HCT116 (cell line): ENCODE measurements at regions of chr1 and their contacts with region 1.

Region 1: GRCh38 chr1:202018468-202019255 is 8.3 kb downstream of the ELF3 start:
- DNase-seq: peak; percentile 81
- ATAC-seq: peak; percentile 75
- H3K4me3 ChIP-seq: peak overlapping the region; percentile 23 to 48
- H3K27ac ChIP-seq: peak overlapping the region; percentile 94
- H3K4me1 ChIP-seq: peaks cover 93 to 100% of the 10 kb centered on the region in 2 experiments
- H3K27me3 ChIP-seq: no peaks in the 10 kb centered on the region
- CTCF ChIP-seq: no peak
- POLR2A ChIP-seq: no peak
- RAD21 ChIP-seq: no peak

Region 2: GRCh38 chr1:201925981-201926645 is 92.5 kb before region 1 on chr1:
- CTCF ChIA-PET with region 1: no interaction called
- POLR2A ChIA-PET with region 1: no interaction called
- RAD21 ChIA-PET with region 1: no interaction called
- intact Hi-C with region 1: no loop called
- DNase-seq: no peak
- ATAC-seq: no peak
- H3K4me3 ChIP-seq: no peak overlapping the region
- H3K27ac ChIP-seq: no peak overlapping the region
- H3K4me1 ChIP-seq: peaks cover 3 to 6% of the 10 kb centered on the region in 2 experiments; a peak in 3 of 4 replicates
- H3K27me3 ChIP-seq: no peaks in the 10 kb centered on the region
- CTCF ChIP-seq: no peak
- POLR2A ChIP-seq: no peak
- RAD21 ChIP-seq: no peak

Region 3: GRCh38 chr1:202029171-202029665 is 10.6 kb after region 1 on chr1:
- CTCF ChIA-PET with region 1: no interaction called
- POLR2A ChIA-PET with region 1: interaction called, 174 read pairs
- RAD21 ChIA-PET with region 1: no interaction called
- intact Hi-C with region 1: no loop called
- DNase-seq: peak; percentile 73
- ATAC-seq: peak; percentile 77
- H3K4me3 ChIP-seq: peak overlapping the region in 1 of 2 experiments; percentile 8; a peak in 1 of 4 replicates
- H3K27ac ChIP-seq: peak overlapping the region; percentile 72
- H3K4me1 ChIP-seq: peaks cover 48 to 73% of the 10 kb centered on the region in 2 experiments
- H3K27me3 ChIP-seq: no peaks in the 10 kb centered on the region
- CTCF ChIP-seq: no peak
- POLR2A ChIP-seq: no peak
- RAD21 ChIP-seq: peak; percentile 32; the same call in 1 of the 2 replicates

Region 4: DNA sequence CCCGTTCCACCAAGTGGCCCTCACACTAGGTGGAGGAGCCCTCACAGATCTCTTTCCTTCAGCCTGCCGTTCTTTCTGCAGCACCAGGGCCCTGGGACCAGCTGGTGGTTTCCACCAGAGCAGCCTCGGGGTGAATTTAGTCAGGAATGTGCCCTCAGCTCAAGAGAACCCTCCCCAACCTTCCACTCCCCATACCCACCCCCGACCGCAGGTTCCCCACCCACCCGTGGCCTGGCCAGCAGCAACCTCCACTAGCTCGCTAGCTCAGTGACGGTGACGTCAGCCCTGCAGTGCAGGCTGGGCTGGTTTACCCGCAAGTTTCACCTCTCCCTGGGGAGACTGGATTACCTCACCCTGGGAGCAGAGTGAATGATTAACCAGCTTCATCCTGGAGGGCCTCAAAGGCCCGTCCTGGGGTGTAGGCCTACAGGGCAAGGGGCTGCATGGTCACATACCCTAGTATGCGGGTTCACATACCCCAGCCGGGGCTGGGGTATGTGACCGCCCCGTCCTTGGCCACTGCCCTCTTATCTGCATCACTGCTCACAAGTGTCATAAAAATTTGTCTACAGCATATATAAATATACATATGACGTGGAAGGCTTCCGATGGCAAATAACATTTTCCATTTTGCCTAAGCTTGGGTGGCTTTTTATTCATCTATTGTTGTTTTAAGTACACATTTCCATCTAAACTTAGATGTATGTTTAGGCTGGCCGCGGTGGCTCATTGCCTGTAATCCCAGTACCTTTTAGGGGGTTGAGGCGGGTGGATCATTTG is 16.2 kb after region 1 on chr1:
- CTCF ChIA-PET with region 1: no interaction called
- POLR2A ChIA-PET with region 1: interaction called, 45 read pairs
- RAD21 ChIA-PET with region 1: interaction called in 1 of 2 experiments, 3 read pairs
- intact Hi-C with region 1: no loop called
- DNase-seq: peak; percentile 91
- ATAC-seq: peak; percentile 93
- H3K4me3 ChIP-seq: peak overlapping the region; percentile 20 to 44; a peak in 3 of 4 replicates
- H3K27ac ChIP-seq: peak overlapping the region; percentile 93
- H3K4me1 ChIP-seq: peaks cover 44 to 63% of the 10 kb centered on the region in 2 experiments
- H3K27me3 ChIP-seq: no peaks in the 10 kb centered on the region
- CTCF ChIP-seq: no peak
- POLR2A ChIP-seq: no peak
- RAD21 ChIP-seq: peak; percentile 24; the same call in 1 of the 2 replicates

Region 5: GRCh38 chr1:202056644-202057461 is 38.2 kb after region 1 on chr1:
- CTCF ChIA-PET with region 1: no interaction called
- POLR2A ChIA-PET with region 1: interaction called, 19 read pairs
- RAD21 ChIA-PET with region 1: interaction called in 1 of 2 experiments, 3 read pairs
- intact Hi-C with region 1: loop called (anchors 2 kb)
- DNase-seq: peak; percentile 76
- ATAC-seq: peak; percentile 84
- H3K4me3 ChIP-seq: peak overlapping the region; percentile 11 to 43; a peak in 3 of 4 replicates
- H3K27ac ChIP-seq: peak overlapping the region; percentile 91
- H3K4me1 ChIP-seq: peaks cover 49 to 60% of the 10 kb centered on the region in 2 experiments
- H3K27me3 ChIP-seq: no peaks in the 10 kb centered on the region
- CTCF ChIP-seq: no peak
- POLR2A ChIP-seq: no peak
- RAD21 ChIP-seq: no peak

Region 6: DNA sequence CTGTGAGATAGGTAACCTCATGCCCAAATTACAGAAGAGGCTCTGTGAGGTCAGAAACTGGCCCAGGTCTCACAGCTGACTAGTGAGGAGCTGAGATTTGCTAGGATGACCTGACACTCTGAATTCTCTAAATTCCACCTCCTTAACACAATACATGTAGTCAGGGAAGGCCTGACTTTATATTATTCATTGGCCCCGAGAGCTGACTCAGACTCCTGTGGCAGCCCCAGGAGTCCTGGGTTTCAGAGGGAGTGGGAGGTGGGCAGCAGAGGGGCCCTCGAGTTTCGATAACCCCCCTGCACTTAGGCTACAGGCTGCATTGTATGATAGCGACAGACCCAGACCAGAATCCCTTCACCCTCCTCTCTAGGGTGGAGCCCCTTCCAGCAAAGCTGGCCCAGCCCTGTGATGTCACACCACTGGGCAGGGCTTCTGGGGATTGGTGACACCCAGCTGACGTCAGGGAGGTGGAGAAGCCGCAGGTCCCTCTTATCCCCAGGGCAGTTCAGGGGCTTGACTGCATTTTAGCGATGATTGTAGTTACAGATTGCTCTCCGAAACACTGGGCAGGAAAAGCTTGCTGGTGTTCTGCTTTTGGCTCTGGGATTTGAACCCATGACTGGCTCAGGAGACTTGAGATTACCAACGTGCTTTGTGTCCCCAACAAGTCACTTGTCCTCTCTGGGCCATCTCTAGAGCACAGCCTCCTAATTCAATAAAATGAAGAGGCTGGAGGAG is 87.0 kb after region 1 on chr1:
- CTCF ChIA-PET with region 1: no interaction called
- POLR2A ChIA-PET with region 1: interaction called, 10 read pairs
- RAD21 ChIA-PET with region 1: interaction called in 1 of 2 experiments, 3 read pairs
- intact Hi-C with region 1: no loop called
- DNase-seq: peak; percentile 88
- ATAC-seq: peak; percentile 83
- H3K4me3 ChIP-seq: peak overlapping the region; percentile 22 to 40
- H3K27ac ChIP-seq: peak overlapping the region; percentile 86
- H3K4me1 ChIP-seq: peaks cover 58 to 71% of the 10 kb centered on the region in 2 experiments
- H3K27me3 ChIP-seq: no peaks in the 10 kb centered on the region
- CTCF ChIP-seq: no peak
- POLR2A ChIP-seq: no peak
- RAD21 ChIP-seq: no peak

Region 7: DNA sequence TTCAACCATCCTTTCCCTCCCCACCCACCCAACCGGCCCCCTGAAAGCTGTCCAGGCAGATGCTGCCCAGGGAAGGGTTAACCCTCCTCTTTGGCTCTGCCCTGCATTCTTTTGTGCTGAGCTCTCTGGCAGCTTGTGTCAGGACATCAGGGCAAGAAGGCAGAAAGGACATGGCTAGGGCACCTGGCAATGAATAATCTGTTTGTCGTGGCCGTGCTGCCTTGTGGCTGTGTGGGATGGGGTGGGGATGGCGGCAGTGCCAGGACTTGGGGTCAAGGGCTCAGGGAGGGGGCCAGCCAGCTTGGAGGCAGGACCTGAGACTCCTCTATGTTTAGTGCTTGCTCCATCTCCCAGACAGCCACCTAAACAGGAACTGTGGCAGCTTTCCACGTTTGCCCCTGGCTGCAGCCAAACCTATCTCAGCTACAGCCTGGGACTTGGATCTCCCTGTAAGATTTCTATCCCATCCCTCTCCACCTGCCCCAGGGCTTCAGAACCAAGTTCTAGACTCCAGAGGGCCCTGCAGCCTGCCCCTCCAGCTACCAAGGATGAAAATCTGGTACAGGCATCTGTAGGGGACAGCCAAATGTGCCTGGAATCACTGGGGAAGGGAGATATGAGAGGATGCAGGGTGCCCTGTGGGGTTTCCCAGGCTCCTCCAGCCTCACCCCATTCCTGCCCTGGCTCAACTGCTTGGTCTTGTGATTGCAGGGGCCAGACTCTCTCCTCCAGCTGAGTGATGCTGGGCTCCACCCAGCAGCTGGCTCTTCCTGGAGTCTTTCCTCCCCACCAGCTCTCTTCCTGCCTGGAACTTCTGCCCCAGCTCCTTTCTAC is 94.4 kb after region 1 on chr1:
- CTCF ChIA-PET with region 1: interaction called, 9 read pairs
- POLR2A ChIA-PET with region 1: interaction called, 10 read pairs
- RAD21 ChIA-PET with region 1: interaction called in 1 of 2 experiments, 4 read pairs
- intact Hi-C with region 1: no loop called
- DNase-seq: no peak
- ATAC-seq: peak; percentile 41
- H3K4me3 ChIP-seq: no peak overlapping the region
- H3K27ac ChIP-seq: no peak overlapping the region
- H3K4me1 ChIP-seq: peaks cover 38 to 47% of the 10 kb centered on the region in 2 experiments
- H3K27me3 ChIP-seq: no peaks in the 10 kb centered on the region
- CTCF ChIP-seq: no peak
- POLR2A ChIP-seq: no peak
- RAD21 ChIP-seq: no peak

Region 8: DNA sequence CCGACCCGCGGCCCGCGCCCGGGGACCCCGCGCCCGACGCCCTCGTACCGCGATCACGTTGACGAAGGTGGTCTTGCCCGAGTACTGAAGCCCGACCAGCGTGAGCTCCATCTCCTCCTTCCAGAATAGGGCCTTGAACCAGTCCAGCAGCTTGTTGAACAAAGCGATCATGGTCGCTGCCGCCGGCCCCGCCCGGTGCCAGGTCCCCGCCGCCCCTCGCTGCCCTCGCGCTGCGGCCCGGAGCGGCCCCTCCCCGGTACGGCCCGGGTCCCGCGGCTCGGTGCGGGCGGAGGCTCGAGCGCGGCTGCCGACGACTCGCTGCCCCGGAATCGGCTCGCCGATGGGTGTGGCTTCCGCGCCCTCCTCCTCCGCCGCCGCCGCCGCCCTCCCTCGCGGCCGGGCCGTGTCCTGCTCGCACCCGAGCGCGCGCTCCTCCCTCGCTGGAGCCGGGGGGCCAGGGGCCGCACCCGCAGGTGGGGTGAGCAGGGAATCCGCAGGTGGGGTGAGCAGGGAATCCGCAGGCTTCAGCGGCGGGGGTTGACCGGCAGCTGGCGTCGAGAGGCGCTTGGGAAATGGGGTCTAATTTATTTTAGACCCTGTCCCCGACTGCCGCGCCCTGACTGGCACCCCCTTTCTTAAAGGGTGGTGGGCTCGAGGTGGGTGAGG is 125.9 kb after region 1 on chr1 and contains the start of gene ARL8A:
- CTCF ChIA-PET with region 1: no interaction called
- POLR2A ChIA-PET with region 1: no interaction called
- RAD21 ChIA-PET with region 1: no interaction called
- intact Hi-C with region 1: no loop called
- DNase-seq: no peak
- ATAC-seq: peak; percentile 84
- H3K4me3 ChIP-seq: peak within 1 kb of the TSS; percentile 77
- H3K27ac ChIP-seq: peak within 1 kb of the TSS; percentile 86
- H3K4me1 ChIP-seq: peaks cover 5 to 20% of the 10 kb centered on the region in 2 experiments; a peak in 3 of 4 replicates
- H3K27me3 ChIP-seq: no peaks in the 10 kb centered on the region
- CTCF ChIP-seq: no peak
- POLR2A ChIP-seq: no peak
- RAD21 ChIP-seq: no peak
- total RNA-seq, gene ARL8A: 45.6 TPM

Region 9: DNA sequence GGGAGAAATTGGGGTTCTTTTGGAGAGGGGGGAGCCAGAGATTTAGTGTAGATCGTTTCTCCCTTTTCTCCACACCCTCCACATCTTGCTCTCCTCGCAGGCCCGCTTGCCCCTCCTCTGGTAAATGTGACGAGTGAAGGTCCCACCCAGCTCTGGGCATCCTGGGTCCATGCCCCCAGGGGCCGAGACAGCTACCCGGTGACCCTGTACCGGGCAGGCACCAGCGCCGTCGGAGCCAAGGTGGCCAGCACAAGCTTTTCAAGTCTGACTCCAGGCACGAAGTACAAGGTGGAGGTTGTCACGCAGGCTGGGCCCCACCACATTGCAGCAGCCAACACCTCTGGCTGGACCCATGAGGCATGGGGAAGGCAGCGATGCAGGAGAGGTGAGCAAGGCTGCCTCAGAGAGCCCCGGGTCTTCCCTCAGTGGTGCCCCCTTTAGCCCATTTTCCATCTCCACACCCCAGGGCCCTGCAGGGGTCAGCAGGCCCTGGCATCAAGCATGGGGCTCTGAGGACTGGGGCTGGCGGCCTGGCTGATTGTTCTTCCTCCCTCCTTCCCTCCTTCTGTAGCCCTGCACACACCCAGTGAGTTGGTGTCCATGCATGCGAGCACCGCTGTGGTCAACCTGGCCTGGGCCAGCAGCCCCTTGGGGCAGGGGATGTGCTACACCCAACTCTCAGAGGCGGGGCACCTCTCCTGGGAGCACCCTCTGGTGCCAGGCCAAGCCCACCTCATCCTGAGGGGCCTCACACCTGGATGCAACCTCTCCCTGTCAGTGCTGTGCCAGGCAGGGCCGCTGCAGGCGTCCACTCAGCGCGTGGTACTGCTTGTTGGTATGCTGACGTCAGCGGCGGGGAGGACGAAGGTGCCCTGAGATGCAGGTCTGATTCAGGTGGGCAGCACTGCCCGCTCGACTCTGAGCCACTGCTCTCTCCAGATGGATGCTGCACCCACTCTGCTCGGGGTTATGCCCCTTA is 158.6 kb after region 1 on chr1:
- CTCF ChIA-PET with region 1: no interaction called
- POLR2A ChIA-PET with region 1: no interaction called
- RAD21 ChIA-PET with region 1: no interaction called
- intact Hi-C with region 1: no loop called
- DNase-seq: no peak
- ATAC-seq: 0 out of 2 replicates have a peak, but pooled peaks have one; percentile 46
- H3K4me3 ChIP-seq: no peak overlapping the region
- H3K27ac ChIP-seq: no peak overlapping the region
- H3K4me1 ChIP-seq: no peaks in the 10 kb centered on the region
- H3K27me3 ChIP-seq: no peaks in the 10 kb centered on the region
- CTCF ChIP-seq: no peak
- POLR2A ChIP-seq: no peak
- RAD21 ChIP-seq: no peak